Endothelial cell of umbilical vein (primary cell): ENCODE measurements at regions of chr7 and their contacts with region 1.

Region 1: DNA sequence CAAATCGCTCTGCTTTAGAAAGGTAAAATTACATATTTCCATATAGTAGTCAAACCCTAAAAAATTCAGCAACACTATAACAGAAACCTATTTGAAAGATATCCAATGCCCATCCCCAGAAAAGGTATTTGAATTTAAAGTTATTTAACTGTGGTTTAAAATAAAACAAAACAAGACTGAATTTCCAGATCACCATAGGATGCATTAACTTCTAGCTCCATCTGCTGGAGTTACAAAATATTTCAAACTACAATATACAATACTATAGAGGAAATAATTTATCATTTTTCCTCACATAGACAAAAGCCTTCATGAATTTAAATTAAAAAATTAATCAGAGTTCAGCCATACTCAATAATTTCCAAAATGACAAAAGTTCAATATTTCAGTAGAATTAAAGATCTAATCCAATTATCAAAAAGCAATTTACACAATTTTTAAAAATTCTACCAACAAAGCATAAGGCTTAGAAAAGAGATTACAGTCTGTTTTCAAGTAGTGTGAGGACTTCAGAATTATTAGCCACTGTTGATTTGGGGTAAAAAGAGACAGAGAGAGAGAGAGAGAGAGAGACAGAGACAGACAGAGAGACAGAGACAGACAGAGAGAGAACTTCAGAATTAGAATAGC is 75.9 kb downstream of the LMBR1 start:
- DNase-seq: peak; percentile 33
- H3K4me3 ChIP-seq: no peak overlapping the region
- H3K27ac ChIP-seq: no peak overlapping the region
- H3K4me1 ChIP-seq: no peaks in the 10 kb centered on the region
- H3K27me3 ChIP-seq: no peaks in the 10 kb centered on the region
- CTCF ChIP-seq: peak; percentile 17
- POLR2A ChIP-seq: no peak

Region 2: DNA sequence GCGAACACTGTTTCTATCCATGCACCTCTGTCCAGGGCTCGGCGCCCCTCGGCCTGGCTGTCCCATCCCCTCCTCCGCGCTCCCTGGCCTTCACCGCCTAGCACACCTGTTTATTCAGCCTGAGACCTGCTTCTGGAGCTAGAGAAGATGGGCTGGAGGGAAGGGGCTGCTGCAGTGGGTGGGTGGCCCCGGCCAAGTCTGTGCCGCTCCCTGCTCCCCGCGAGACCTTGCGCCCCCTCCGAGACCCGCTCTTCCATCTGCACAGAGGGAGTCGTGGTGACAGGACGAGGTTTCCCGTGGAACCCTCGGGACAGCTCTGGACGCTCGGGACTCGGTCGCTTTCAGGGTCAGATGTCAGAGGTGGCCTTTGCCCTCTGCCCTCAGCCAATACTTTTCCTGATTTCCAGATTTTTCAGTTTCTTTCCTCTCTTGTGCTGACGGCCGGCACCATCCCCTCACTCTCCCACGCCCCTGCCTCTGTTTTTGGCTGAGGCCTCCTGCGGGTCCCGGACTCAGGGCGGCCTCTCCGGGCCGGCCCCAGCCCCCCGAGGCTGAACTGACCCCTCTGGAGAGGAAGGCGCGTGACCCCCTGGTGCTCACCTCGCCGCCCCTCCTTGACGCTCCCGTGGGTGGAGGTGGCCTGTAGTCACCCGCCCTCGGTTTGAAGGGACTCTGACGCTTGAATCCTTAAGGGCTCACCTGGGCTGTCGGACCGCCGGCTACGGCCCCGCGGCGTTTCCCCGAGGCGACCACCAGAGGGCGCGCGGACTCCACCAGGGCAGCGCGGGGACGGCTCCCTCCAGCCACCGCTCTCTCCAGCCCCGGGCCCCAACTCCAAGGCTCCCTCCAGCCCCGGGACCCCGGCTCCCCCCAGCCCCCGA is 1020.4 kb before region 1 on chr7:
- CTCF ChIA-PET with region 1: interaction called, 6 read pairs
- POLR2A ChIA-PET with region 1: no interaction called
- dilution Hi-C with region 1: no loop called
- intact Hi-C with region 1: loop called (anchors 1 kb)
- DNase-seq: no peak
- H3K4me3 ChIP-seq: no peak overlapping the region
- H3K27ac ChIP-seq: no peak overlapping the region
- H3K4me1 ChIP-seq: no peaks in the 10 kb centered on the region
- H3K27me3 ChIP-seq: peaks cover 6 to 11% of the 10 kb centered on the region in 2 experiments
- CTCF ChIP-seq: peak; percentile 63 to 97
- POLR2A ChIP-seq: no peak

Region 3: DNA sequence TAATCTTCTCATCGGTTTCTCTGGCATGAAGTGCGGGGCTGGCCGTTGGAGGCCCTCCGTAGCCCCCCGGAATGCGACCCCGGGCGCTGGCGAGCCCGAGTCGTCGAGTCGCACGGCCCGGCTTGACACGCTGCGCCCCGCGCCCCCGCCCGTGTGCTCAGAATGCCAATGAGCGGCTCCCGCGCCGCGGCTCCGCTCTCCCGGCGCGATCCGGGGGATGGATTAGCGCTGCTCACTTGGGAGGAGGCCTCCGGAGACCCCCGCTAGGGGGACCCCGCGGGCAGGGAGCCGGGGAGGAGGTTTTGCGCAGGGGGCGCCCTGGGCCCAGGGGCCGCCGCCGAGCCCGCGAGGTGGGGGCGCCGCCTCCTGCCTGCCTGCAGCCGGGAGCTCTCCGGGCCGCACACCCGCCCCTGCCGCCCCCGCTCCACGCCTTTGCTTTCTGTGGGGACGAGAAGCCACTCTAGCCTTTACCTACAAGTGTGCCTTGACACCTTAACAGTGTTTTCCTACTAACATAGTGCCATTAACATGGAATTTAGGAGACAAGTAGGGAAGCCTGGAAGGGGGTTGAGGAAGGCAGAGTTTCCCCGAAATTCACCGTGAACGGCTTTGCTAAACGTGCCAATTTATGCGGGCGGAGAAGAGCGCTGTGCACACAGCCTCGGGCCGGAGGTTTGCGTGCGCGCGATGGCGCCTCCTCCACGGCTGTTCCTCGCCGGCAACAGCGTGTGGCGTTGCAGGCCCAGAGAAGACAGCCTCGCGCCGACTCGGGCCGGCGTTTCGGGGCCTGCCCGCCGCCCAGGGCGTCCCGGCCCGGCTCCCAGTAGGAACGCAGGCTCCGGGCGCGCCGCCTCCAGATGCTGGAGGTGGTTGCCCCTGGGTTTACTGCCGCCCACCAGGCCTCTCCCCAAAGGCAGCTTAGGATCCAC is 1011.9 kb before region 1 on chr7:
- CTCF ChIA-PET with region 1: no interaction called
- POLR2A ChIA-PET with region 1: no interaction called
- dilution Hi-C with region 1: no loop called
- intact Hi-C with region 1: loop called (anchors 2 kb)
- DNase-seq: peak; percentile 69
- H3K4me3 ChIP-seq: peak overlapping the region; percentile 12 to 56 (median 31)
- H3K27ac ChIP-seq: no peak overlapping the region
- H3K4me1 ChIP-seq: peaks cover 29% of the 10 kb centered on the region
- H3K27me3 ChIP-seq: peaks cover 14 to 58% of the 10 kb centered on the region in 2 experiments
- CTCF ChIP-seq: peak; percentile 50 to 80
- POLR2A ChIP-seq: no peak

Region 4: DNA sequence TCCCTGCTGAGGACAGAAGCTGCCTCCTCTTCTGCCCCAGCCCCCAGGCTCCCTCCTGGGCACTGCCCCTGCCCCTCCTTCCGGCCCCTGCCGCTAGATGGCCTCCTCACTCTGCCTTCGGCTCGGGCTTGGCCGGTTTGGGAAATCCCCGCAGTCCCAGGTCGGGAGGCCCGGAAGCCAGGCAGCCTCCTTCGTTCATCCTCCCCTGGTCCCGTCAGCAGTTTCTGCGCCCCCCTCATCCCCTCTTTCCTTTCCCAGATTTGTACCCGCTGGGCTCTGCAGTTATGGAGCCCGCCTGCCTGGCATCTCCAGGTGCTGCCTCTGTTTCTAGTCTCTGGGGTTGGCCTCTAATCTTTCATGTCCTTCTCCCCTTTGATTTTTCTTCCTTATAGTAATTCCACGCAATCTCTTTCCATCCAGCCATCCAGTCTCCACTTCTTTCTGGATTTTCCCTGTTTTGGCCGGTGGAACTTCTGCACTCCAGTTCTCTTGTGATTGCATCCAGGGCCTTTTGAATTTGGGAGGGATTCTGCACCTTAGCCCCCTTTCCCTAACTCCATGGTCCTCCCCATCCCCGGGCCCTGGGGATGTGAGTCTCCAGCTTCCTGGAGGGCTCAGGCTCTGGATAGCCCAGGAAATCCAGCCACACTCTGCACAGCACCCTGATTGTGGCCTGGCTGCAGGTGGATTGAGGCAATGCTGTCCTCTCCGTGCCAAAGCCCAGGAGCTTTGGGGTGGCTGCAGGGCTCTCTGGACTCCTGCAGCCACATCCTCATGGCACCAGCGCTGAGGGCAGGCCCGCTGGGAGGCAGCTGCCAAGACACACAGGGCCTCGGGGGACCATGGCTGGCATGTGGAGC is 1001.5 kb before region 1 on chr7:
- CTCF ChIA-PET with region 1: interaction called, 13 read pairs
- POLR2A ChIA-PET with region 1: no interaction called
- dilution Hi-C with region 1: no loop called
- intact Hi-C with region 1: no loop called
- DNase-seq: peak; percentile 34
- H3K4me3 ChIP-seq: no peak overlapping the region
- H3K27ac ChIP-seq: no peak overlapping the region
- H3K4me1 ChIP-seq: peaks cover 6% of the 10 kb centered on the region
- H3K27me3 ChIP-seq: peaks cover 34 to 42% of the 10 kb centered on the region in 2 experiments
- CTCF ChIP-seq: peak; percentile 31 to 88
- POLR2A ChIP-seq: no peak

Region 5: DNA sequence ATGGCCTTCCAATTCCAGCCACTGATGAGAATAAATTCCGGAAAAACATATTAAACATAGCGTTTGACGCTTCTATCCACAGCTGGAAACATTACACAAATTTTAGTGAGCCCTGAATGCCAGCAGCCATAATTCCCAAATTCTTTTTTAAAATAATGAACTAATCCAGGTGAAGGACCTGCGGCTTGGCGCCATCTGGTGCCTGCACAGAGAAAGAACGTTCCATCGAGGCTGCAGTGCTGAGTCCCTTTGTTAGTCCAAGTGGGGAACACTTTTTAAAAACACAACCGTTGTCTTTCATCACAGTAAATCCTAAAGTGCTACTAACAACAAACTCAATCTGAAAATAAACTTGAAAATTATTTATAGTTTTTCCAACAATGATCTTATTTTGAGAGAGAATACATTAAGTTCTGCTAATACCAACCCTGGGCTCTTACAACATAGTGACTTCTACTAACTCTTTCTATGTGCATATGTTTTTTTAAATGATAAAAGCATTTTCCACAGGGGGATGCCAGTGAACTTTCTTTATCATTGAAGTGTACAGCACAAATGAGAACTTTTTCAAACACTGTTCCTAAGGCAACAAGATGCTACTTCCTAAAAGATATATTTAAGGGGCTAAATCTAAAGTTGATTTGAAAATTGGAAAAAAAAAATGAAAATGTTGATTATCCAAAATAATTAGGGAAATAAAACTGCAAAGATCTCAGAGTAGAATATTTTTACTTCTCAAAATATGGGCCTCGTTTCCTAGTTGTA is 343.4 kb before region 1 on chr7:
- CTCF ChIA-PET with region 1: no interaction called
- POLR2A ChIA-PET with region 1: no interaction called
- dilution Hi-C with region 1: no loop called
- intact Hi-C with region 1: loop called (anchors 5 kb)
- DNase-seq: peak; percentile 31
- H3K4me3 ChIP-seq: no peak overlapping the region
- H3K27ac ChIP-seq: no peak overlapping the region
- H3K4me1 ChIP-seq: peaks cover 8% of the 10 kb centered on the region
- H3K27me3 ChIP-seq: no peaks in the 10 kb centered on the region
- CTCF ChIP-seq: peak; percentile 67 to 69
- POLR2A ChIP-seq: no peak

Region 6: DNA sequence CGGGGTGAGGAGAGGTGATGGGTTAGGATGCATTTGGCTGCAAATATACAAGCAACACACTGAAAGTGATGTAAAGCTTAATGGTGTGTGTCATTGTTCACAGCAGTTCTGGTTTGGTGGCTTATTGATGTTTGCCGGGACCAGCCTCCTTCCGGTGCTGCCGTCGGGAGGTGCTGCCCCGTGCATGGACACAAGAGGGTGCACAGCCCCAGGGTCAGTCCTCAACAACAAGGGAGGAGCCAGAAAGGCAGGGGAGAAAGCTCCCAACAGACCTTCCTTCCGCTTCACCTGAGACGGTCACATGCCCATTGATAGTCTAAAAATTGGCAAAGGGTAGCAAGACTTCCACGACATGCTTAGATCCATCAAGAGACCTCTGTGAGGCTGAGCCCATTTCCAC is 167.0 kb before region 1 on chr7:
- CTCF ChIA-PET with region 1: no interaction called
- POLR2A ChIA-PET with region 1: no interaction called
- dilution Hi-C with region 1: no loop called
- intact Hi-C with region 1: loop called (anchors 2 kb)
- DNase-seq: no peak
- H3K4me3 ChIP-seq: no peak overlapping the region
- H3K27ac ChIP-seq: no peak overlapping the region
- H3K4me1 ChIP-seq: no peaks in the 10 kb centered on the region
- H3K27me3 ChIP-seq: peaks cover 2 to 6% of the 10 kb centered on the region in 2 experiments
- CTCF ChIP-seq: peak; percentile 16 to 28
- POLR2A ChIP-seq: no peak

Region 7: DNA sequence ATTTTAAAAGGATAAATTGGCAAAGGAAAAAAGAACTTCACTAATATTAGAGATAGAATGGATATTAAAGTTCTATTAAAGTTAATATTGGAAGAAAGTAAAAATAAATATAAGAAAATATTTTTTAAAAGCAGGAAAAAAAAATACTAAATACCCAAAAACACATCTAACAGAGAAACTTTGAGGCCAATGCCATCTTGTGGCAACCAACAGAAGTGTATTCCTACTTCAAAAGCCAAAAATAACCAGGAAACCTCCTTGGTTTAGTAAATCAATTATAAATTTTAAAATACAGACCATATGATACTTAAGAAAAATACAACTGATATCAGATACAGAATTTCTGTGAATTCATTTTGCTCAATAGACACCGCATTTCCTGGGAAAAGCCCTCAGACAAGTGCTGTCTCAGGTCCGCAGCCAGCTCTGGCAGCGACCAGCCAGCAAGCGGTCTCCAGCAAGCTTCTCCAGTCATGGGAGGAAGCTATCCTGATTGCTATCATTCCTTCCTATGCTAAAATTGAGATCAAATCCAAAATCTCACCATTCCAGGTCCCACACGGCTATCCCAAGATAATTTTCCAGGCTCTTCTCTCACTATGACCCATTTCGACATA is 10.6 kb after region 1 on chr7:
- CTCF ChIA-PET with region 1: interaction called, 10 read pairs
- POLR2A ChIA-PET with region 1: no interaction called
- dilution Hi-C with region 1: no loop called
- intact Hi-C with region 1: no loop called
- DNase-seq: peak; percentile 22
- H3K4me3 ChIP-seq: no peak overlapping the region
- H3K27ac ChIP-seq: no peak overlapping the region
- H3K4me1 ChIP-seq: no peaks in the 10 kb centered on the region
- H3K27me3 ChIP-seq: no peaks in the 10 kb centered on the region
- CTCF ChIP-seq: peak; percentile 17 to 34
- POLR2A ChIP-seq: no peak

Region 8: GRCh38 chr7:156892821-156893706 is 76.0 kb after region 1 on chr7 and contains the start of gene LMBR1:
- CTCF ChIA-PET with region 1: no interaction called
- POLR2A ChIA-PET with region 1: no interaction called
- dilution Hi-C with region 1: no loop called
- intact Hi-C with region 1: no loop called
- DNase-seq: peak; percentile 96
- H3K4me3 ChIP-seq: peak within 1 kb of the TSS; percentile 90 to 94 (median 91)
- H3K27ac ChIP-seq: peak within 1 kb of the TSS; percentile 83
- H3K4me1 ChIP-seq: peaks cover 19% of the 10 kb centered on the region
- H3K27me3 ChIP-seq: no peaks in the 10 kb centered on the region
- CTCF ChIP-seq: peak; percentile 35 to 66
- POLR2A ChIP-seq: peak; percentile 79
- total RNA-seq, gene LMBR1: 57.7 and 72.9 TPM in 2 replicates

Region 9: DNA sequence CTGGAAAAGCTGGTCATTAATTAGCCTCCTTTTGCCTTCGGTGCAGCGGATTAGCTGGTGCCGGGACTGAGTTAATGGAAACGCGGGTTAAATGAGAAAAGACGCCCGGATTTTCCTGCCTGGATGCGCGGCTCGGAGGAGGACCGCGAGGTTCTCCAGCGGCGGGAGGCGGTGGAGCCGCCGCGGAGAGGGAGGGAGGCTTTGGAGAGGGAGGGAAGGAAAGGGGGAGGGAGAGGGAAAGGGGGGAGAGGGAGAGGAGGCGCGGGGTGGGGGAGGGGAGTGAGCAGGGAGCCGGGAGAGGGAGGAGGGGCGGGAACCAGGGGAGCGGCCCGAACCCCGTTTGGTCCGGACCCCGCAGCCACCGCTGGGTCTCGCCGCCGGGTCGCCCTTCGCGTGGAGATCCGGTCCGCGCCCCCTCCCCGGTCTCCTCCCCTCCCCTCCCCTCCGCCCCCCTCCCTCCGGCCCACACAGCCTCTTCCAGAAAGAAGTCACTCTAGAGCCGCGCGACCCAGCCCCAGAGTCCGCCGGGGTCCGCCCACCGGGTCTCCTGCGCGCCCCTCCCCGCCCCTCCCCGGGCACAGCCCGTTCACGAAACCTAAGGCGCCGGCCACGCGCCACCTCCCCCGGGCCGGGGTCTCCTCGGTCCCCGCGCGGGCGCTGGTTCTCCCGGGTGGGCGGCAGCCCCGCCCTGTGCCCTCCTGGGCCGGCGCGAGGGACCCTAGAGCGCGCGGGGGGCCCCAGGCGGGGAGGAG is 867.3 kb after region 1 on chr7:
- CTCF ChIA-PET with region 1: no interaction called
- POLR2A ChIA-PET with region 1: no interaction called
- dilution Hi-C with region 1: no loop called
- intact Hi-C with region 1: no loop called
- DNase-seq: no peak
- H3K4me3 ChIP-seq: no peak overlapping the region
- H3K27ac ChIP-seq: no peak overlapping the region
- H3K4me1 ChIP-seq: no peaks in the 10 kb centered on the region
- H3K27me3 ChIP-seq: peaks cover 44 to 74% of the 10 kb centered on the region in 2 experiments
- CTCF ChIP-seq: no peak
- POLR2A ChIP-seq: no peak